Dendritic cell treated with granulocyte-macrophage colony-stimulating factor and Interleukin-4, amounts not matched to agents 40 ng/mL and 50 ng/mL, for 4 days (primary cell): ENCODE measurements at regions of chr13 and their contacts with region 1.

Region 1: DNA sequence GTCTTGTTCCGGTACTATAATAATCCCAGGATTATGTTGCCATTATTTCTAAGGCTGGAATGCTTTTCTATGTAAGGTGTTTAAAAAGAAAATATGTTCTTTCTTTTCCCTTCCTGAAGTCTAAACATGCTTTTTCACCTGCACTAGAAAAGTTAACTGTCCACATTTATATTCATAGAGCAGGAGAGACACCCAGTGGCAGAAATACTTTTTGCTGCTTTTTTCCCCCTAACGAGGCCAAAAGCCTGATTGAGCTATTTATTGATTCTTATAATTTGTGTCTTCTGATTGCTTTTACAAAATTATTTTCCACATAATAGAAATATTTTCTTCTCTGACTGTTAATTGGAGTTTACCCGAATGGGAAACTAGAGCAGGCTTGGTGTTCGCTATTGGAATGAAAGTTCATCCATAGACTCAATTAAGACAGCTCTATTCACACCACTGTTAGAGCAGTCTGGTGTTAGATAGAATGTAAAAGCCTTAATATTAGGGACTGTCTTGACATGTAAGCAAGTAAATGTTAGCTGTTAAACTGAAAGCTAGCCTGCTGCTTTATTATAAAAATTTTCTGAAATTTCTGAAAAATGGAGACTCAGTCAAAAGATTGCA is 15.8 kb downstream of the GPR180 start:
- H3K4me3 Mint-ChIP-seq: no peak overlapping the region
- H3K27ac Mint-ChIP-seq: no peak overlapping the region
- H3K4me1 Mint-ChIP-seq: no peaks in the 10 kb centered on the region
- H3K27me3 Mint-ChIP-seq: no peaks in the 10 kb centered on the region

Region 2: GRCh38 chr13:94362411-94362909 is 255.0 kb before region 1 on chr13:
- intact Hi-C with region 1: loop called (anchors 5 kb)
- H3K4me3 Mint-ChIP-seq: no peak overlapping the region
- H3K27ac Mint-ChIP-seq: no peak overlapping the region
- H3K4me1 Mint-ChIP-seq: no peaks in the 10 kb centered on the region
- H3K27me3 Mint-ChIP-seq: no peaks in the 10 kb centered on the region

Region 3: GRCh38 chr13:94435604-94436226 is 181.8 kb before region 1 on chr13:
- intact Hi-C with region 1: loop called (anchors 1 kb)
- H3K4me3 Mint-ChIP-seq: no peak overlapping the region
- H3K27ac Mint-ChIP-seq: no peak overlapping the region
- H3K4me1 Mint-ChIP-seq: no peaks in the 10 kb centered on the region
- H3K27me3 Mint-ChIP-seq: peaks cover 3% of the 10 kb centered on the region